AG04450 (cell line): ENCODE measurements at regions of chr17 and their contacts with region 1.

Region 1: GRCh38 chr17:46044286-46044928 is 45.4 kb downstream of the STH start:
- DNase-seq: peak; percentile 82
- H3K4me3 ChIP-seq: no peak overlapping the region
- H3K27ac ChIP-seq: no peak overlapping the region
- H3K27me3 ChIP-seq: no peaks in the 10 kb centered on the region
- CTCF ChIP-seq: peak; percentile 93

Region 2: GRCh38 chr17:45834471-45835396 is 209.7 kb before region 1 on chr17:
- CTCF ChIA-PET with region 1: no interaction called
- POLR2A ChIA-PET with region 1: no interaction called
- DNase-seq: no peak
- H3K4me3 ChIP-seq: no peak overlapping the region
- H3K27ac ChIP-seq: no peak overlapping the region
- H3K27me3 ChIP-seq: peaks cover 6% of the 10 kb centered on the region
- CTCF ChIP-seq: no peak

Region 3: DNA sequence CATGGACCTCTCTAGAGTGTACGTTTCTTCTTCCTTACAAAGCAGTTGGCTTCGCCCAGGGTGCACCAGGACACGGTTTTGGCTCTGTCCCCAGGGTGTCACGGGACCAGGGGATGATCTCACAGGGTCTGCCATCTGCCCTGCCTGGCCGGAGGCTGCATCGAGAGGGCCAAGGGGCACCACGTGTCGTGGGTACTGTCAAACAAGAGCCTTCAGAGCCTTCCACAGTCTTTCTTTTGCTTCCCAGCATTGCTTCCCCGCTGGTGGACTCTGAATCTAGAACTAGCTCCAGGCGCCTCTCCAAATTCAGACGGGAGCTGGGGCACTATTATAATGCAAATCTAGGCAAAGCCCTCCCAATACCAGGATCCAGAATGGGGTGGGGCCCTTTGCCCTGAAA is 102.1 kb before region 1 on chr17:
- CTCF ChIA-PET with region 1: no interaction called
- POLR2A ChIA-PET with region 1: no interaction called
- DNase-seq: no peak
- H3K4me3 ChIP-seq: no peak overlapping the region
- H3K27ac ChIP-seq: no peak overlapping the region
- H3K27me3 ChIP-seq: peaks cover 33% of the 10 kb centered on the region
- CTCF ChIP-seq: no peak

Region 4: DNA sequence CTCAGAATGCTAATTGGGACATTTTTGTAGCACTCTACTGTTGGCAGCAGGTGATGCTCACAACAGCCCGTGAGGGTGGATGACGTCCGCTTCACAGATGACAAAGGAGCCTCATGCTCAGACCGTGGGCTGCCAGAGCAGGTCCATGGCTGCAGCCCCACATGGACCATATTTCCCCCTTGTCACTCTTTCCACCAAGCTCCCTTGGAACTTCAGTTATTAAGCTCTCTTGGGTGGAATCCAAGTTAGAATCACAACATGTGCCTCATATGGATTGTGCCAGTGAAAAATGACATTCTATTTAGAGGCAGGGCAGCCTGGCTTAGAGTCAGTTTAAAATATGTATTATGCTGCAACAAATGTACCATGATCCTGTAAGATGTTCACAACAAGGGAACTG is 78.6 kb before region 1 on chr17:
- CTCF ChIA-PET with region 1: no interaction called
- POLR2A ChIA-PET with region 1: no interaction called
- DNase-seq: no peak
- H3K4me3 ChIP-seq: no peak overlapping the region
- H3K27ac ChIP-seq: no peak overlapping the region
- H3K27me3 ChIP-seq: peaks cover 23% of the 10 kb centered on the region
- CTCF ChIP-seq: no peak

Region 5: DNA sequence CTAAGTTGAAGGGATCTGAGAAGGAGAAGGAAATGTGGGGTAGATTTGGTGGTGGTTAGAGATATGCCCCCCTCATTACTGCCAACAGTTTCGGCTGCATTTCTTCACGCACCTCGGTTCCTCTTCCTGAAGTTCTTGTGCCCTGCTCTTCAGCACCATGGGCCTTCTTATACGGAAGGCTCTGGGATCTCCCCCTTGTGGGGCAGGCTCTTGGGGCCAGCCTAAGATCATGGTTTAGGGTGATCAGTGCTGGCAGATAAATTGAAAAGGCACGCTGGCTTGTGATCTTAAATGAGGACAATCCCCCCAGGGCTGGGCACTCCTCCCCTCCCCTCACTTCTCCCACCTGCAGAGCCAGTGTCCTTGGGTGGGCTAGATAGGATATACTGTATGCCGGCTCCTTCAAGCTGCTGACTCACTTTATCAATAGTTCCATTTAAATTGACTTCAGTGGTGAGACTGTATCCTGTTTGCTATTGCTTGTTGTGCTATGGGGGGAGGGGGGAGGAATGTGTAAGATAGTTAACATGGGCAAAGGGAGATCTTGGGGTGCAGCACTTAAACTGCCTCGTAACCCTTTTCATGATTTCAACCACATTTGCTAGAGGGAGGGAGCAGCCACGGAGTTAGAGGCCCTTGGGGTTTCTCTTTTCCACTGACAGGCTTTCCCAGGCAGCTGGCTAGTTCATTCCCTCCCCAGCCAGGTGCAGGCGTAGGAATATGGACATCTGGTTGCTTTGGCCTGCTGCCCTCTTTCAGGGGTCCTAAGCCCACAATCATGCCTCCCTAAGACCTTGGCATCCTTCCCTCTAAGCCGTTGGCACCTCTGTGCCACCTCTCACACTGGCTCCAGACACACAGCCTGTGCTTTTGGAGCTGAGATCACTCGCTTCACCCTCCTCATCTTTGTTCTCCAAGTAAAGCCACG is 17.1 kb before region 1 on chr17:
- CTCF ChIA-PET with region 1: interaction called, 10 read pairs
- POLR2A ChIA-PET with region 1: no interaction called
- DNase-seq: no peak
- H3K4me3 ChIP-seq: no peak overlapping the region
- H3K27ac ChIP-seq: no peak overlapping the region
- H3K27me3 ChIP-seq: no peaks in the 10 kb centered on the region
- CTCF ChIP-seq: no peak

Region 6: DNA sequence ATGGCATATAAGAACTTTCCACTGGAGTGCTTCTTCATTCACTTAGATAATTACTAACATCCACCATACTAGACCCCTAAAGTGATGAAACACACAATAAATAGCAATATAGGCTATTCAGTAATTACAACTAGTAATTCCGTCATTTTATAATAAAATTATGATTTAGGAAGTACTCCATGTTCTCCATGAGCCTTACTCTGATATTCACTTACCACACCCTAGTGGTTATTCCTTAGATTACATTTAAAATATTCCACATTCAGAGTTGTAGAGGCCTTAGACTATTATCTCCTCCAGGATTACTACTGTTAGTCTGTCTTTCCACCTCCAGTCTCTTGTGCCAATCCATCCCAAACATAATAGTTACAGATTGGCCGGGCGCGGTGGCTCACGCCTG is 17.0 kb after region 1 on chr17:
- CTCF ChIA-PET with region 1: interaction called, 29 read pairs
- POLR2A ChIA-PET with region 1: no interaction called
- DNase-seq: no peak
- H3K4me3 ChIP-seq: no peak overlapping the region
- H3K27ac ChIP-seq: no peak overlapping the region
- H3K27me3 ChIP-seq: no peaks in the 10 kb centered on the region
- CTCF ChIP-seq: peak; percentile 23; the same call in 1 of the 2 replicates

Region 7: GRCh38 chr17:46199379-46199778 is 155.0 kb after region 1 on chr17:
- CTCF ChIA-PET with region 1: interaction called, 20 read pairs
- POLR2A ChIA-PET with region 1: no interaction called
- DNase-seq: no peak
- H3K4me3 ChIP-seq: no peak overlapping the region
- H3K27ac ChIP-seq: no peak overlapping the region
- H3K27me3 ChIP-seq: no peaks in the 10 kb centered on the region
- CTCF ChIP-seq: no peak

Region 8: DNA sequence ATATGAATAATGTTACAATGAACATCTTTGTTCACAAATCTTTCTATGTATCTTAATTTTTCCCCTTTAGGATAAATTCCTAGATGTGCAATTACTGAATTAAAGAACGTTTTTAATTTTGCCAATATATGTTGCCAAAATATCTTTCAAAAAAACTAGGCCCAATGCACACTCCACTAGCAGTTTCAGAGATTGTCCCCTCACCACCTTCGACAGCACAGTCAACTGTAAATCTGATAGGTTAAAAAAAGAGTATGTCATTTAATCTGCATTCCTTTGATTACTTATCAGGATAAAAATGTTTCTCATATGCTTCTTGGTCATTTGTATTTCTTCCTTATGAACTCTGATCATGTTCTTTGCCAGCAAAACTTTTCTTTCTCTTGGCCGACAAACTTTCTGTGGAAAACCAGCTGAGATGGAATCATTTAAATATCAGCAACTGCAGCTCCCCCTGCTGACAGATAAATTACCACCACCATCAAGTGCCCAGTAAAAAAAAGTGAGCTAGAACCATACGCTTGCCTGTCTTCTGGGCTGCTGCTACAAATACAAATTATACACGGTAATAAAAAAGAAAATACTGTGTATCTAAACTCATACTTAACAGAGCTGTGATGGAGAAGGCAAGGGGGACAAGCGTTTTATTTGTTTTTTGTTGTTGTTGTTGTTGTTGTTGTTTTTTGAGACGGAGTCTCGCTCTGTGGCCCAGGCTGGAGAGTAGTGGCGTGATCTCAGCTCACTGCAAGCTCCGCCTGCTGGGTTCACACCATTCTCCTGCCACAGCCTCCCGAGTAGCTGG is 168.4 kb after region 1 on chr17:
- CTCF ChIA-PET with region 1: interaction called, 127 read pairs
- POLR2A ChIA-PET with region 1: no interaction called
- DNase-seq: peak; percentile 54
- H3K4me3 ChIP-seq: no peak overlapping the region
- H3K27ac ChIP-seq: no peak overlapping the region
- H3K27me3 ChIP-seq: no peaks in the 10 kb centered on the region
- CTCF ChIP-seq: peak; percentile 78